ENCODE measurements at regions of chr3 and their contacts with region 1.

Region 1: GRCh38 chr3:10437272-10437994 is 68.0 kb downstream of the ATP2B2 start:
- DNase-seq: peak; percentile 10 to 87 (median 49)
- ATAC-seq: peak; percentile 97
- H3K4me3 ChIP-seq: no peak overlapping the region
- H3K4me3 Mint-ChIP-seq: peak overlapping the region; percentile 13
- H3K27ac ChIP-seq: peak overlapping the region in 1 of 2 donors; percentile 22
- H3K27ac Mint-ChIP-seq: peak overlapping the region; percentile 88
- H3K4me1 ChIP-seq: peaks cover 27% of the 10 kb centered on the region
- H3K4me1 Mint-ChIP-seq: peaks cover 37% of the 10 kb centered on the region
- H3K27me3 ChIP-seq: no peaks in the 10 kb centered on the region
- H3K27me3 Mint-ChIP-seq: no peaks in the 10 kb centered on the region
- CTCF ChIP-seq: no peak

Region 2: DNA sequence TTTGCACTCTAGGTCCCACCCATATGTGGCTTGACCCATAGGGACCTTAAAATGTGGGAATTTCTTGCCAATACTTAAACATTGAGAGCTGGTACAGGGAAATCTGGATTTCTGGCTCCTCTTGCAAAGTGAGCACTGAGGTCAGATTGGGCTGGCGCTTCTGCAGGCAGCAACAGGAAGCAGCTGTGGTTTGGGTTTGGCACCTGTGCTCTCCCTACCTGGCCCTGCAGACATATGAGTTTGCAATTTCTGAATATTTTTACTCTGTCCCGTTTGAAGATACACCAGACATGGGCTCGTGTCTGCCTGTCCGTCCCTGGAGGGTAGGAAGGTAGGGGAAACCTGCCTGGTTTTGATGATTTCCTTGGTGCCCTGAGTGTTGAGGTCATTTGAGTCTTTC is 41.8 kb before region 1 on chr3:
- CTCF ChIA-PET with region 1: no interaction called
- POLR2A ChIA-PET with region 1: interaction called, 13 read pairs
- intact Hi-C with region 1: loop called in 1 of 2 experiments (anchors 2 kb)
- DNase-seq: peak in 13 of 14 experiments; percentile 17 to 77 (median 39)
- ATAC-seq: peak; percentile 88
- H3K4me3 ChIP-seq: peak overlapping the region; percentile 10
- H3K4me3 Mint-ChIP-seq: peak overlapping the region; percentile 73
- H3K27ac ChIP-seq: no peak overlapping the region
- H3K27ac Mint-ChIP-seq: peak overlapping the region; percentile 35
- H3K4me1 ChIP-seq: peaks cover 74% of the 10 kb centered on the region
- H3K4me1 Mint-ChIP-seq: peaks cover 53% of the 10 kb centered on the region
- H3K27me3 ChIP-seq: no peaks in the 10 kb centered on the region
- H3K27me3 Mint-ChIP-seq: no peaks in the 10 kb centered on the region
- CTCF ChIP-seq: no peak

Region 3: GRCh38 chr3:11260460-11260859 is 823.0 kb after region 1 on chr3:
- CTCF ChIA-PET with region 1: no interaction called
- POLR2A ChIA-PET with region 1: no interaction called
- intact Hi-C with region 1: no loop called
- DNase-seq: no peak
- ATAC-seq: no peak
- H3K4me3 ChIP-seq: no peak overlapping the region
- H3K4me3 Mint-ChIP-seq: no peak overlapping the region
- H3K27ac ChIP-seq: no peak overlapping the region
- H3K27ac Mint-ChIP-seq: no peak overlapping the region
- H3K4me1 ChIP-seq: no peaks in the 10 kb centered on the region
- H3K4me1 Mint-ChIP-seq: no peaks in the 10 kb centered on the region
- H3K27me3 ChIP-seq: no peaks in the 10 kb centered on the region
- H3K27me3 Mint-ChIP-seq: peaks cover 19% of the 10 kb centered on the region
- CTCF ChIP-seq: no peak